BJ (cell line): ENCODE measurements at regions of chr11 and their contacts with region 1.

Region 1: DNA sequence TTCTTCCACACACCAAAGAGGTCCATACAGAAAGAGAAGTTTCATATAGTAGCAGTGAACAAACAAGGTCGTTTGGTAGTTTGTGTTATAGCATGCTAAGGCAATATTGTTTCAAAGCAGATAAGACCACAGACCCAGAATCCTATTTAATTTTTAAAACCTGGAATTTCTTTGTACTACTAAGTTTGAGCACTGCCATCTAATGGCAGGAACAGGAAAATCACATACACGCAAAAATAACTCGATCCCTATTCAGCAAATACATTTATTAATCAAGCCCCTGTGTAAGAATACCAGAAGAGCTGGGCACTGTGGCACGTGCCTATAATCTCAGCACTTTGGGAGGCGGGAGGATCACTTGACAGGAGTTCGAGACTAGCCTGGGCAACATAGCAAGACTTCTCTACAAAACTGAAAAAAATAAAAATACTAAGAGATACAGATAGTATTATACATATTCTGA is 2.9 kb upstream of the BTBD10 start:
- DNase-seq: no peak
- H3K4me3 ChIP-seq: no peak overlapping the region
- H3K27me3 ChIP-seq: peaks cover 9% of the 10 kb centered on the region; the same call in 1 of the 2 replicates
- CTCF ChIP-seq: peak; percentile 62

Region 2: GRCh38 chr11:13391217-13391616 is 74.7 kb before region 1 on chr11:
- CTCF ChIA-PET with region 1: no interaction called
- POLR2A ChIA-PET with region 1: no interaction called
- DNase-seq: no peak
- H3K4me3 ChIP-seq: no peak overlapping the region
- H3K27me3 ChIP-seq: no peaks in the 10 kb centered on the region
- CTCF ChIP-seq: no peak

Region 3: DNA sequence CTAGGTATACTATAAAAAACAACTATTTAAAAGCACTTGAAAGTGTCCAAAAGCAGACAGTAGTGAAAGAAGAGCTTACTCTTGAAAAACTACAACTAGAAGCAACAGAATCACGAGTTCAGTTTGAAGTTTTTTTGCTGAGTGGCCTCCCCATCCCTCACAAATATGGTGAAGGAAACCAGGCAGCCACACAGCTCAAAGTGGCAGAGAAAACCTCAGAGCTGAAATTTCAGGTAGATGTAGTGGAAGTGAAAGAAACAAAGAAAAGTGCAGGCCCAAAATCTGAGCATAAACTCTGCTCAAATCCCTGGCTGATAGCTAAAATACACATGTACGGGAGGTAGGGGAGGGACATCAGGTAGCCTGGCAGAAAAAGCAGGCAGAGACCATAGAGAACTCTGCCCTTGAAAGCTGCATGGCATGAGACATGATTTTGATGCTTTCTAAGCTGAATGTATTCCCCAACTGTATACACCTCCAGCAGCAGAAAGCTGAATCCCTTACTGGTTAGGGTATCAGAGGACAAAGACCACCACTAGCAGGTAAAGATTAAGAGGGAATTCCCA is 15.0 kb before region 1 on chr11:
- CTCF ChIA-PET with region 1: interaction called, 3 read pairs
- POLR2A ChIA-PET with region 1: interaction called, 12 read pairs
- DNase-seq: no peak
- H3K4me3 ChIP-seq: no peak overlapping the region
- H3K27me3 ChIP-seq: no peaks in the 10 kb centered on the region
- CTCF ChIP-seq: no peak

Region 4: DNA sequence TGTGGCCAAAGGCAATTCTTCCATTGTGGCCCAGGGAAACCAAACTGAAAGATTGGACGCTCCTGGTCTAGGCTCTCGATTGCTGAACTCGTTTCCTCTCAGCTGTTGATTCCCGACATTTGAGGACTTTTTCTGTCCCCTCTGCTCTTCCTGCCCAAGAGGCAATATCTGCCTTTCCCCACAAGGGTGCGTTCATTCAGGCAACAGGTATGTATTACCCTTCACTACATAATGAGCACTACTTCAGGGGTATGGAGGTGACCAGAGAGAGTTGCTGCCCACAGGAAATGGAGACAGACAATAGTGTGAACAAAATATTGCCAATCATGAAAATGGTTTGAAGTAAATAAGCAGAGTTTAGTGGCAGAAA is 21.7 kb after region 1 on chr11:
- CTCF ChIA-PET with region 1: no interaction called
- POLR2A ChIA-PET with region 1: no interaction called
- DNase-seq: no peak
- H3K4me3 ChIP-seq: no peak overlapping the region
- H3K27me3 ChIP-seq: no peaks in the 10 kb centered on the region
- CTCF ChIP-seq: peak; percentile 41

Region 5: GRCh38 chr11:13561860-13562259 is 95.9 kb after region 1 on chr11:
- CTCF ChIA-PET with region 1: no interaction called
- POLR2A ChIA-PET with region 1: no interaction called
- DNase-seq: no peak
- H3K4me3 ChIP-seq: no peak overlapping the region
- H3K27me3 ChIP-seq: no peaks in the 10 kb centered on the region
- CTCF ChIP-seq: no peak